Breast epithelium (tissue), 4 donors: ENCODE measurements at regions of chr11 and their contacts with region 1.

Region 1: DNA sequence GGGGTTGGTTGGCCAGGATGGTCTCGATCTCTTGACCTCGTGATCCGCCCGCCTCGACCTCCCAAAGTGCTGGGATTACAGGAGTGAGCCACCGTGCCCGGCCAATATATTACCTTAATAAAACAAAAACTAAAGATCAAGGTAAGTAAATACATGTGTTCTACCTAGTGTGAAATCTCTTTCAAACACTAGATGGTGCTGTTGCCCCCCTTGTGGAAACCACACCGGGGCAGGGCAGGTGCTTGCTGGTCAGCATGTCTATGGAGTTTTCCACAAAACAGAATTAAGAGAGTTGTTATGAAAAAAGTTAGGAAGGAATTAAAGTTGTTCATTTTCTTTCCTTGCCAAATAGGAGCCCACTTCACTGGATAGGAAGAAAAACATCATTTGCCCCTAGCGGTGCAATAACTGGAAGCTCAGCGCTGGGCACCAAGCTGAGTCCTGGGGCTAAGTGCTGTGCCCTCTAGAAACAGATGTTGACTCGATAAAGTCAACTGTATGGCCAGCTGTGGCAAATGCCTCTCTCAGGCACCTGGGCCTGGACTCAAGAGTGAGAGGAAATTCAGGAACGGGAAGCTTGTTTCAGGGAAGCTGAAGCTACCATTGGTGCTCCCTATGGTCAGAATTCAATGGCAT is 6.3 kb upstream of the KCNJ5 start:
- DNase-seq: peak; percentile 60 to 72
- H3K4me3 ChIP-seq: no peak overlapping the region
- H3K27ac ChIP-seq: no peak overlapping the region
- H3K4me1 ChIP-seq: no peaks in the 10 kb centered on the region
- H3K27me3 ChIP-seq: peaks cover 0 to 9% of the 10 kb centered on the region in 2 donors
- CTCF ChIP-seq: peak; percentile 55 to 83 (median 82)
- POLR2A ChIP-seq: no peak

Region 2: DNA sequence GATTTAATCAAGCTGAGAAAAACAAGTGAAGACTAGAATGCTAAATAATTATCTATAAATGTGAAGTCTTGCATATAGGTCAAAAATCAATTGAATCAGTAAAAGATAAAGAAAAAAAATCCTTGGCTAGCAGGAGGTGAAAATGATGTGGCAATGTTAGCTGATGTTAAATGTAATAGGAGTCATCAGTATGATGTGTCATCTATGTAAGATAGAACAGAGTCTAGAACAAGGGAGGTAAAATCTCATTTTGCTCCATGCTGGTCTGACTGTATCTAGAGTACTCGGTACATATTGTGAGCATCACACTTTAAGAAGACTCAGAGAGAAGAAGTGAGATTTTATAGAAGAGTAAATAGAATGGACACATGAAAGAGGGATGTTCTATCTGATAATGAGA is 1018.7 kb before region 1 on chr11:
- intact Hi-C with region 1: loop called (anchors 5 kb)
- DNase-seq: no peak
- H3K4me3 ChIP-seq: no peak overlapping the region
- H3K27ac ChIP-seq: no peak overlapping the region
- H3K4me1 ChIP-seq: no peaks in the 10 kb centered on the region
- H3K27me3 ChIP-seq: no peaks in the 10 kb centered on the region
- CTCF ChIP-seq: no peak
- POLR2A ChIP-seq: no peak

Region 3: DNA sequence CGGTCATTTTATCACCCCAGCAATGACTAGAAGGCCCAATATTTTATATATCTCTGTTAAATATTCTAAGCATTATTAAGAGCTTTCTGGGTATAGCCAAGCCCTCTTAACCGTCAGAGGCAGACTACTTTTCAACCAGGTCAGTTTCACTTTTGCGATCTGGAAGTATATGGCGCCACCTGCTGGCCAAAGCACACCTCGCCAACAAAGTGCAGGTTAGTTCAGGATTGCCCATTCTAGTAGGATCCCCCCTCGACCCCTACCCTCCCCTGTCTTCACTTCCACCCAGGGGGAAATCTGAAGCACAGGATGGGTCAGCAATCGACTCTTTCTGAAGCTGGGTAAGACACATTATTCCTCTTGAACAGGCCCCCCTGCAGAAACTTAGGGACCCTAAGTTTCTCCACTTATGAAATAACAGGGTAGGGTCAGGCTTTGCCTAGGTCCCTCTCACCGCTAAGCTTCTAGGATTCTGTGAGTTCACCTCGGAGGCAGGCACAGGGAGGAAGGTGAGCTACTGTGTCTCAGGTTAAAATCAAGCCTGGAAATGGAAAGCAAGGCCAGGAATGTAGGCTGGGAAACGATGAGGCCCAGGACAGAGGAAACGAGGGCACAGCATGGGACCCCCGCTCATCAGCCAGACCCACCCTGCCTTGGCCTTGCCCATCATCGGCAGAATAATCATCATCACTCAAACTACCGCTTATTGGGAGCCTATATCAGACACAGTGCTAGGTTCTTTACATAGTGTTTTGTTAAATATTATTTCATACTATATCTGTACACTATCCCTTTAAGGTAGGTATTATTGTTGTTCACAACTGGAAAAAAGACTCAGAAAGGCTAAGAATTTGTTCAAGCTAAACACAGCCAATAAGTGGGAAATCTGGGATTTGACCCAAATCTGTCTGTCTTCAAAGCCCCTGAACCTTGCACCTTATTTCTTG is 53.4 kb before region 1 on chr11:
- intact Hi-C with region 1: no loop called
- DNase-seq: peak; percentile 69 to 80
- H3K4me3 ChIP-seq: peak overlapping the region in 1 of 3 donors; percentile 19
- H3K27ac ChIP-seq: no peak overlapping the region
- H3K4me1 ChIP-seq: peaks cover 0 to 5% of the 10 kb centered on the region in 2 donors
- H3K27me3 ChIP-seq: peaks cover 0 to 9% of the 10 kb centered on the region in 2 donors
- CTCF ChIP-seq: peak; percentile 56 to 84 (median 79)
- POLR2A ChIP-seq: no peak

Region 4: DNA sequence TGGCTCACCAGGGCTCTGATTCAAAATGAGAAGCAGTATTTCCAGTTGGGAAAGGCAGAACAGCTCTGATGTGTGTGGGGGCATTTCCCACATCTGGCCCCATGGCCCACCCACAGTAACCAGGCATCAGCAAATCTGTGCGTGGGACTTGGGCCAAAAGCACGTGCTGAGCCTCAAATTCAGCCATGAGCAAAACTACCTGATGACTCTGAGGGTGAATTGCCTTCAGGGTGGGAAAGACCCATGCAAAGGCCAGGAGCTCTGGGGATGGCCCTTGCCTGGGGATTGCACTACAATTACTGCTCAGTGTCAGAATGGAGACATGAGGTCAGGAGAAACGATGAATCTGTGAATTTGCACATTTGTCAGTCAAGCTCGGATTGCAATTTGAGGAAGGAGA is 37.0 kb after region 1 on chr11:
- intact Hi-C with region 1: loop called (anchors 2 kb)
- DNase-seq: no peak
- H3K4me3 ChIP-seq: no peak overlapping the region
- H3K27ac ChIP-seq: no peak overlapping the region
- H3K4me1 ChIP-seq: no peaks in the 10 kb centered on the region
- H3K27me3 ChIP-seq: peaks cover 0 to 5% of the 10 kb centered on the region in 2 donors
- CTCF ChIP-seq: no peak
- POLR2A ChIP-seq: no peak

Region 5: DNA sequence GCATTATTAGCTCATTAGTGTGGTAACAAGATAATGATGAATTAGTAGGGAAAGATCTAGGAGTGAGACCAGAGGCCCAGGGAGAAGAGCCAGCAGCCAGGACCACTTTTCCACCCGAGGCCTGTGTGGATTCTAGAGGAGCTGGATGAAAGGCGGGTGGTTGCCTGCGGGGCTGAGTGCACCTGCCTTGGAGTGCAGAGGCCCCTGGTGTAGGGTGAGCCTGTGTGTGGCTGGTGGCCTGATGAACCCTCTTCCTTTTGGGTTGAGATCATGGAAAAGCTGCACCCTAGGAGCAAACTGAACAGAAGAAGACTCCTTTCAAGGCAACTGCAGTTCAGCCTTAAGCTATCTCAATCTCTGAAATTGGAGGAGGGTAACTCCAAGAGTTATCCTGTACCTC is 63.8 kb after region 1 on chr11:
- intact Hi-C with region 1: loop called (anchors 5 kb)
- DNase-seq: no peak
- H3K4me3 ChIP-seq: no peak overlapping the region
- H3K27ac ChIP-seq: no peak overlapping the region
- H3K4me1 ChIP-seq: no peaks in the 10 kb centered on the region
- H3K27me3 ChIP-seq: peaks cover 0 to 6% of the 10 kb centered on the region in 2 donors
- CTCF ChIP-seq: no peak
- POLR2A ChIP-seq: no peak

Region 6: GRCh38 chr11:130006929-130007328 is 1122.1 kb after region 1 on chr11:
- intact Hi-C with region 1: loop called (anchors 5 kb)
- DNase-seq: no peak
- H3K4me3 ChIP-seq: no peak overlapping the region
- H3K27ac ChIP-seq: no peak overlapping the region
- H3K4me1 ChIP-seq: no peaks in the 10 kb centered on the region
- H3K27me3 ChIP-seq: no peaks in the 10 kb centered on the region
- CTCF ChIP-seq: no peak
- POLR2A ChIP-seq: no peak